HEK293 (cell line): ENCODE measurements at regions of chr19 and their contacts with region 1.

Region 1: GRCh38 chr19:54189735-54190502 is 539 bp upstream of the MBOAT7 start:
- H3K4me3 ChIP-seq: peak overlapping the region; percentile 87
- H3K27ac ChIP-seq: peak overlapping the region; percentile 95
- H3K4me1 ChIP-seq: peaks cover 14% of the 10 kb centered on the region
- CTCF ChIP-seq: no peak; the same call in 1 of the 2 replicates

Region 2: DNA sequence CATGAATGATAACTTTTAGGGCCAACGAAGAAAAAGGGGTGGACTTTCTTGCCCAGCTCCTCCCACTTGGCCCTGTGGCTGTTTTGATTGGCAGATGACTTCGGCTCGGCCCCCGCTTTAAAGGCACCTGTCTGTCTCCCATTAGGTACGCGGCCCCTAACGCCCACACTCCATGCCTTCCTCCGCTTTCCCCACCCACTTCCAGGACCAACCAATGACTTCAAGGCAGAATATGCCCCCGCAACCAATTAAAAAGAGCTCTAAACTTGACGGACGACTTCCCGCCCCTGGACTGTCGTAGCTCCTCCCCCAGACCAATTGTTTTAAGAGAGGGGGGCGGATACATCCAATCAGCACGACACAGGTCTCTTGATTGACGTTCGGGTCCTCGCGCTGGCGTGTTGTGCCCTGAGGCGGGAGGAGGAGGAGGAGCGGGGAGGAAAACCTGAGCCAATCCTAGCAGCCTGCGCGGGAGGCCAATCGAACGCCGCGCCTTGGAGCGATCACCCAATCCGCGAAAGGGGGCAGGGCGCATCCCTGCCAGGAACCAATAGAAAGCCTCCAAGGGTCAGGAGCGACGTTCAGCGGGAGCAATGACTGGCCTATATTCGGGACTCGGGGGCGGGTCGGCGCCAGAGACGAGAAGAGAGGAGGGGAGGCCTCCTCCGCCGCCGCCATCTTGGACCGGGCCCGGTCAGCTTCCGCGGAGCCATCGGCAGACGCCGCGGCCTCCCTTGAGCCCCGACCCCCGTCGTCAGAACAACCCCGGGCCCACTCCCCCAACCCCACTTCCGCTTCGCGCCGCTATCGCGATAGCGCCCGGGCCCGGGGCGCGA is 52.6 kb before region 1 on chr19 and contains the start of gene CNOT3:
- CTCF ChIA-PET with region 1: no interaction called
- POLR2A ChIA-PET with region 1: interaction called, 63 read pairs
- H3K4me3 ChIP-seq: peak within 1 kb of the TSS; percentile 94
- H3K27ac ChIP-seq: peak within 1 kb of the TSS; percentile 88
- H3K4me1 ChIP-seq: peaks cover 13% of the 10 kb centered on the region
- CTCF ChIP-seq: no peak

Region 3: DNA sequence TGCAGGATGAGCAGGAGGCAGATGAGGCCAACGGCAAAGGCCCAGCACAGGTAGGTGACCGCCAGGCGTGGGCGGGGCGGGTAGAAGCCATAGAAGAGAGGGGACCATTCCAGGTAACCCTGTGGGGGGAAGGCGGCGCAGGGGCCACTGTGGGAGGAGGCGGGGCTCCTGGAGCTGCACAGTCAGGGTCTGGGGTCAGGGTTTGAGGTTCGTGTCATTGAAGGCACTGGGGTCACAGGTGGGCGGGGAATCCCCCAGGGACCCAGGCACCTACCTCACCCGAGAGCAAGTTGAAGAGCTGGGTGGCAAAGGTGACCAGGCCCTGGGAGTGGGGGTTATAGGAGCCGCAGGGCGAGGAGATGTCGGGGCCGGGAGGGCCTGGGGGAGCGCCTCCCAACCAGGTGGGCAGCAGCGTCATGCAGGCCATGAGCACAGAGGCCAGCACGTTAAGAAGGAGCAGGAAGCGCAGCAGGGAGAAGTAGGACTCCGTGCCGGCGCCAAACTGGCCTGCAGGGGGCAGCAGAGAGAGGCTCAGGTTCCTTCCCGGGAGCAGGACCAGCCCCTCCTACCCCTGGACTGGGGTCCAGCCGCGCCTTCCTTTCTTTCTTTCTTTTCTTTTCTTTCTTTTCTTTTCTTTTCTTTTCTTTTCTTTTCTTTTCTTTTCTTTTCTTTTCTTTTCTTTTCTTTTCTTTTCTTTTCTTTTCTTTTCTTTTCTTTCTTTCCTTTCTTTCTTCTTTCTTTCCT is 21.6 kb before region 1 on chr19:
- CTCF ChIA-PET with region 1: interaction called, 9 read pairs
- POLR2A ChIA-PET with region 1: interaction called, 90 read pairs
- H3K4me3 ChIP-seq: no peak overlapping the region
- H3K27ac ChIP-seq: no peak overlapping the region
- H3K4me1 ChIP-seq: no peaks in the 10 kb centered on the region
- CTCF ChIP-seq: peak; percentile 83

Region 4: DNA sequence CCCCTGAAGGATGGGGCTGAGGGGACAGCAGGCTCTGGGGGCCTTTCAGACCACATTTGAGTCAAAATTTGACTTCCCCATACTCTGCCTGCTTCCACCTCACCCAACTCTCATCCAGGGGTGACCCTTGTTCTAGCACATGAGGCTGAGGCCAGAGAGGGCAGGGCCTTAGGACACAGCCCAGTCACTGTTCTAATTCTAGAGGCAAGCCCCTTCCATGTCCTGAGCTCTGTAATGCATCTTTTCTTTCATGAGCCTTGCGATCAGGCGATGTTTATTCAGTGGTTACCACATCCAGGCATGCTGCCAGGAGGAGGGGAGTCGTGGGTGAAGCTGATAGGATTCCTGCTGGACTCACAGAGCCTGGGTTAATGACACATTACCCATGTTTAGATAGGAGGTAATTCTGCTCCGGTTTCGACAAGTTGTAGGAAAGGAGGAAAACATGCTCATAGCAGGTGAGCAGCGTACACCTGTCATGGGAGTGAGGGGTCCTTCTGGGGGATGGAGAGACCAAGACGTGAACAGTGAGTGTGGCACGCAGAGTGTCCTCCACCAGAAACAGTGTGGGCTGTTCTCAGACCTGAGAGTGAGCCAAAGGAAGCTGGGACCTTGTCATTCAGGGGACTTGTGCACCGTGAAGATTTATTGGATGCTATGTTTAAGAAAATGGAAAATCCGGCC is 20.0 kb after region 1 on chr19:
- CTCF ChIA-PET with region 1: interaction called, 6 read pairs
- POLR2A ChIA-PET with region 1: interaction called, 152 read pairs
- H3K4me3 ChIP-seq: no peak overlapping the region
- H3K27ac ChIP-seq: peak overlapping the region; percentile 71
- H3K4me1 ChIP-seq: peaks cover 26% of the 10 kb centered on the region
- CTCF ChIP-seq: no peak

Region 5: GRCh38 chr19:54463531-54464043 is 273.7 kb after region 1 on chr19 and contains the start of gene LENG9:
- CTCF ChIA-PET with region 1: no interaction called
- POLR2A ChIA-PET with region 1: interaction called, 12 read pairs
- H3K4me3 ChIP-seq: peak within 1 kb of the TSS; percentile 90
- H3K27ac ChIP-seq: peak within 1 kb of the TSS; percentile 81
- H3K4me1 ChIP-seq: peaks cover 5% of the 10 kb centered on the region; the same call in 1 of the 2 replicates
- CTCF ChIP-seq: no peak